ENCODE measurements at regions of chrX and their contacts with region 1.

Region 1: DNA sequence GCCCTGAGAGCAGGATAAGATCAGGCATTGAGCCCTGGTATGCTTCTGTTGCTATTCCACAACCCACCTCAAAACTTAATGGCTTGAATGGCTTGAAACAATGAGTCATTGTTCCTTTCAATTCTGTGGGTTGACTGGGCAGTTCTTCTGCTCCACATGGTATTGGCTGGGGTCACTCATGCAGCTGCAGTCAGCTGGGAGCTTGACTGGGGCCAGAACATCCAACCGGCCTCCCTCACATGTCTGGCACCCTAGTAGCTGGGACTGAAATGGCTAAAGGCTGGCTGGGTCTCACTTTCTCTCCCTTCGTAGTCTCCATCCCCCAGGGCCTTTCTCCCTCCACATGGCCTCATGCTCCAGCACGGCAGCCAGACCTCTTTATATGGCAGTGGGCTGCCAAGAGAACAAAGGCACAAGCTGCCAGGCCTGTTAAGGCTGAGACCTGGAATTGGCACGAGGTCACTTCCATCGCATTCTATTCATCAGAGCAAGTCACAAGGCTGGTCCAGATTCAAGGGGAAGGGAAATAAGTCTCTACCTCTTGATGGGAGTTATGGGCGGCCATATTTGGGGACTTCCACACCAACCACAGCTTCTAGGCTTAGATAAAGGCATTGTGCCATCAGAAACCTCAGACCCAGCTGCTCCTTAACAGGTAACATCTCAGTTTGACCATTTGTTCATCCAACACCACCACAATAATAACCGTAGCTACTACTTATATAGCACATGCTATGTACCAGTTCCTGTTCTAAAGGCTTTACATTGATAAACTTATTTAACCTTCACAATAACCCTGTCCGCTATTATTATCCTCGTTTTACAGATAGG is 159.7 kb upstream of the ATP6AP2 start:
- DNase-seq: peak; percentile 40 to 89 (median 75)

Region 2: DNA sequence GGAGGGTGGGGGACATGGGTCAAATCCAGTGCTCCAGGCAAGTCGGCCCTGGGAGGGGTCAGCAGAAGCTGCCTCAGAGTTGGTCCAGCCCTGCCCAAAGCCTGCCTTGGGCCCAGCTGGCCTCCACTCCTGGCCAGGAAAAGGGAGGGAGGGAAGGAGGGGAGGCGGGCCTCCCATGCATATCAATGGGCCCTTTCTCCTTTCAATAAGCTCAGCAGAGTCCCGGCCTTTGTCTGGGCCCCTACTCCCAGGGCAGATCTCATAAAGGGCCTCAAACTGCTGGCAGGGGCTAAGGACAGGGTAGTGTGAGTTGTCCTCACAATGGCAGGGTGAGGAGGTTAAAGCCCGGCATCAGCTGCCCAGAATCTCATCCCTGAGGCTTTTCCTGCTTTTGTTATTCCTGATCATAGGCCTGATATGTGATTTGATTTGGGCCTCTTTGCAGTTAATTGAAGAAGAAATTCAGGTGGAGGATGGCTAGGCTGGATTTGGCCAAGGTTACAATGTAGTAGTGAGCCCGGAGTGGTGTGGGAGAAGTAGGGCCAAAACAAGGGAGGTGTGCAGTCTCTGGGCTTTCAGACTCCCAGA is 38.6 kb after region 1 on chrX:
- intact Hi-C with region 1: loop called (anchors 5 kb)
- DNase-seq: peak; percentile 41 to 87 (median 75)

Measured in head of caudate nucleus (tissue), 42 donors.